Left ventricle myocardium superior (tissue), 1 donor: ENCODE measurements at regions of chr1 and their contacts with region 1.

Region 1: GRCh38 chr1:93447516-93448291 is at the start of gene FNBP1L:
- DNase-seq: peak; percentile 88
- ATAC-seq: peak; percentile 98
- total RNA-seq, gene FNBP1L: 23.6 TPM

Region 2: DNA sequence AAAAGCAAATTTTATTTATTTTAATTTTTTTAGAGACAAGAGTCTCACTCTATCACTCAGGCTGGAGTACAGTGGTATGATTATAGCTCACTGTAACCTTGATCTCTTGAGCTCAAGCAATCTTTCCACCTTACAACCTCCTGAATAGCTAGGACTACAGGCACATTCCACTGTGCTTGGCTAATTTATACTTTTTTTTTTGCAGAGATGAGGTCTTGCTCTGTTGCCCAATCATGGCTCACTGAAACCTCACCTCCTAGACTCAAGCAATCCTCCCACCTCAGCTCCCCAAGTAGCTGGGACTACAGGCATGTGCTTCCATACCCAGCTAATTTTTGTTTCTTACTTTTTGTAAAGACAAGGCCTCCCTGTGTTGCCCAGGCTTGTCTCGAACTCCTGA is 52.5 kb before region 1 on chr1:
- intact Hi-C with region 1: no loop called
- DNase-seq: no peak
- ATAC-seq: no peak

Region 3: DNA sequence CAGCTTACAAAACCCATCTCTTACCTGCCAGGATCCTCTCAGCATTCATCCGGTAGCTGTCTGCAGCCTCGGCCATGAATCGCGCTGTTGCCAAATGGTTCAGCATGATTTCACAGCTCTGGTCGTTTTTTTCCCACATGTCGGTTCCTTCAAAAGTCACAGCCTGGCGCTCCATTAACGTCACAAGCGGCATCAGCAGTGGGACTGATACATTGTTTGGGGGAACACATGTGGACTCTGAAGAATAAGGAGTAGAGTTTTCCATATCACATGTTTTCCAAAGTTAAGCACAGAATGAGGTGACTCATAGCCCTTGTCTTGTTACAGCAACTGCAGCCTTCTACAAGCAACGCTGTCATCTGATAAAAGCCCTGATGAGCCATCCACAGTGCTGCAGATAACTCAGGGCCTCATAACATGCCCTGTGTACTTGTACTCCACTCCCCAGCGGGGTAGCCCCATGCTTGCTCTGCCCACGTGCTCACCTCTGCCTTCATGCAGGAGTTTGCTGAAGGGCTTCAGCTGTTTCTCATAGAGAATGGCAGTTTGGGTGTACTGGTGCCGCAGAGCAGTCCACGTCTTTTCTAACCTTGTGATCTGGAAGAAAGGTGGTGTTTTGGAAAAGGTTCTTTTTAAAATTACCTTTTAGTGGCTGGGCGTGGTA is 119.7 kb after region 1 on chr1:
- intact Hi-C with region 1: loop called (anchors 10 kb)
- DNase-seq: no peak
- ATAC-seq: peak; percentile 74